BJ (cell line): ENCODE measurements at regions of chr2 and their contacts with region 1.

Region 1: DNA sequence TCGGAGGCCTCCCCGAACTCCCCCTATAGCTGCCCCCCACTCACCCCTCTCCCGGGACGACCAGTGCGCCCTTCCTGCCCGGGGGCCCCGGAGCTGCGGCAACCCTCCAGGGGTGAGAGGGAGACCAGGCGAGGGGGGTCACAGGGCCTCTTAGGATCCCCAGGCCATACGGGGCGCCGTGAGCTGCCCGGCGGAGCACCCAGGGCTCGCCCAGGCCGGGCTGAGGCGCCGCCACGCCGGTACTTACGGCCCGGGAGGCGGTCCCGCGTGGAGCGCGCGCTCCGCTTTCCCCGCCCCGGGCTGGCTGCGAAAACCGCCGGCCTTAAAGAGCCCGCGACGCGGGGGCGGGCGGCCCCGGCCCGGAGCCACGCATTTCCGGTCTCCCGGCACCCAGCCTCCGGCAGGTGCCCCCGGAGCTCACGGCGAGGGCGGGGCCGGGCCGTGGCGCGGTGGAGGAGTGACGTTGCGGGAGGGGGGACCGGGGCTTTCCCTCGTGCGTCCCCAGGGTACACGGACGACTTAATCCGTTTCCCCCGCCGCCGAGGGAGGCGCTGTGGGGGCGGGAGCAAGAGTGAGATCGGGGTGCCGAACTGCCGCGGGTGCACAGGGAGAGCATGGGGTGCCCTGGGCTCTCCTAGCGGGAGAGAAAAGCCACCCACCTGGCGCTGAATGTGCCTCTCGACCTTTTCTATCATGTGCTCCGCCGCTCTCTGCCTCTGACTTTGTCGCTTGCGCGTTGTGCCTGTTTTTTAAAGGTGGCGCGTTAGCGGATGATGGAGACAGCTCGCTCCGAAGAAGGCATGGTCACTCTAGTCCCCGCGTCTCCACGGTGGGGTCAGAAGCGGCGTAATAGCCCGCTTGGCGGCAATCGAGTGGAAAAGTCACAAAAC is at the start of gene METTL21A:
- DNase-seq: no peak
- H3K4me3 ChIP-seq: peak within 1 kb of the TSS; percentile 88
- H3K27me3 ChIP-seq: no peaks in the 10 kb centered on the region
- CTCF ChIP-seq: peak; percentile 60
- polyA plus RNA-seq, gene METTL21A: 9.9 and 11.3 TPM in 2 replicates

Region 2: DNA sequence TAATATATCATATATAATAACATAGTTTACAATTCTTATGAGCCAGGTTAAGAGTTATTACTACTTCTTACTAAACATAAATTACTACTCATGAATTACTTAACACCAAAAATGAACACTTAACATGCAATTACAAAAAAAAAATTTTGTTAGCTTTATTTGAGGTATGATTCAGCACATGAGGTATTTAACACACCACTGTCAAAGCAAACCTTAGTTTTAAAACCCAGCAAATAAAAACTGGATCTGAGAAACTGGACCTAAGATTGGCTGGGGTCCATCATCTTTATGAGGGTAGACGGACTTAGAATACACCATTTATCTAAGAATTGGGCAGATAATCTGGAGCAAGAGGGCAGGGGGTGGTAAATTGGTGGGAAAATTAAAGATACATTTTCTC is 177.3 kb before region 1 on chr2:
- CTCF ChIA-PET with region 1: no interaction called
- POLR2A ChIA-PET with region 1: no interaction called
- DNase-seq: no peak
- H3K4me3 ChIP-seq: no peak overlapping the region
- H3K27me3 ChIP-seq: no peaks in the 10 kb centered on the region
- CTCF ChIP-seq: no peak

Region 3: DNA sequence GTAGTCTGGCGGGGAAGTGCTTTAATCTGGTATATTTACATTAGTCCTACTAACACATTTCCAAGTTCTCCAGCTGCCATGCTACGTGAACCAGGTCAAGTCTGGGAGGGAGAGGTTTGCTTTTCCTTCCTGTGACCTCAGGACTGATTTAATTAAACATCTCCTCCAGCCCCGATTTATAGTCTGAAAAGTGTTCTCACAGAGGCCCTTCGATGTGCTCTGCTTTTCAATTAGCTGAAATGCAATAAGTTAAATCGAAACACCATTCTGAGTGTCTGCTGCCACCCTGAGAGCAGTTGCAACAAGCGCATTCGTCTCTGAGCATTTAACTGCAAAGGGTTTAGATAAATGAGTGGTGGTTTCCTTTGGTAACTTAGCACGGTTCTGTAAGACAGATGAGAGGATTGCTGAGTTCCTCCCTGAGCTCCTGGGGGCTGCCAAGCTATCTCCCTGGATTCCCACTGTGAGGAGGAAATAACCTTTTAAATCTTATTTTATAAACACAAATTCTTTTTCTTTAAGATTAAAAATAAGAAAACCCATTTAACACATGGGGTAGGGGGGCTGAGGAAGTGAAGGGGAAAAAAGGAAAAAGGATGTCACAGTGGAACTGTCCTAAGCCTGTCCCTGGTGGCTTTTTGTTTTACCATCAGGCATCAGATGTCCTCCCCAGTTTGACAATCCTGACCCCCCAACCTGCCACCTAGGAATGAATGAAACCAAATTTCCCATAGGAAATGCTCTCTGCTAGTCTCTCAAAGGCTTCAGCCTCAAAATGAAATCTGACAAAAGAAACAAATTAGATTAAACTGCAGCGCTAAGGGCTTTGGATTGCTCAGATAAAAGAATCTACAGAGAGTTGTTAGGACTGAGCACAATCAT is 152.0 kb before region 1 on chr2:
- CTCF ChIA-PET with region 1: no interaction called
- POLR2A ChIA-PET with region 1: no interaction called
- DNase-seq: peak; percentile 42
- H3K4me3 ChIP-seq: no peak overlapping the region
- H3K27me3 ChIP-seq: no peaks in the 10 kb centered on the region
- CTCF ChIP-seq: peak; percentile 82

Region 4: GRCh38 chr2:207725873-207726578 is 100.8 kb after region 1 on chr2:
- CTCF ChIA-PET with region 1: interaction called, 11 read pairs
- POLR2A ChIA-PET with region 1: no interaction called
- DNase-seq: no peak
- H3K4me3 ChIP-seq: no peak overlapping the region
- H3K27me3 ChIP-seq: no peaks in the 10 kb centered on the region
- CTCF ChIP-seq: no peak

Region 5: DNA sequence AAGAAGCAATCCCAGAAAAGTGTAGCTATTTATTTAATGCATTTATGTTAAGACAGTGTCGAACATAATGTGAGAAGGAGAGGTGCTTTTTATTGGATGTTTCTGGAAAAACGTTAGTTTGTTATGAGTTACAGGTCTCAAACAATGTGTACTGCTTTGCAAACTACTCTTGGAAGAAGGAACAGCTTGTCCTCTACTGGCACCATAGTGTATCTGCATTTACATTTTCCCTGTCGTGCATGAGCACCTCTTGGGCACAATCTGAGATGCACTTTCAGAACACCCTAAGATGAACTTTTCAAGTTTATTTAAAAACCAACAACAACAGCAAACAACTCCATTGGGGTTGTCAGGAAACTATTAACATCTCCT is 109.0 kb after region 1 on chr2:
- CTCF ChIA-PET with region 1: interaction called, 15 read pairs
- POLR2A ChIA-PET with region 1: no interaction called
- DNase-seq: no peak
- H3K4me3 ChIP-seq: no peak overlapping the region
- H3K27me3 ChIP-seq: no peaks in the 10 kb centered on the region
- CTCF ChIP-seq: peak; percentile 67